B cell (primary cell): ENCODE measurements at regions of chr15 and their contacts with region 1.

Region 1: GRCh38 chr15:31365655-31366127 is 39.1 kb downstream of the KLF13 start:
- DNase-seq: peak; percentile 79
- ATAC-seq: peak; percentile 31
- H3K4me3 ChIP-seq: peak overlapping the region in 4 of 5 experiments; percentile 5 to 33 (median 15)
- H3K4me3 Mint-ChIP-seq: peak overlapping the region; percentile 80
- H3K27ac ChIP-seq: no peak overlapping the region
- H3K27ac Mint-ChIP-seq: peak overlapping the region; percentile 93
- H3K4me1 ChIP-seq: peaks cover 85 to 87% of the 10 kb centered on the region in 2 donors
- H3K4me1 Mint-ChIP-seq: peaks cover 95% of the 10 kb centered on the region
- H3K27me3 ChIP-seq: no peaks in the 10 kb centered on the region
- H3K27me3 Mint-ChIP-seq: no peaks in the 10 kb centered on the region
- CTCF ChIP-seq: peak; percentile 59

Region 2: DNA sequence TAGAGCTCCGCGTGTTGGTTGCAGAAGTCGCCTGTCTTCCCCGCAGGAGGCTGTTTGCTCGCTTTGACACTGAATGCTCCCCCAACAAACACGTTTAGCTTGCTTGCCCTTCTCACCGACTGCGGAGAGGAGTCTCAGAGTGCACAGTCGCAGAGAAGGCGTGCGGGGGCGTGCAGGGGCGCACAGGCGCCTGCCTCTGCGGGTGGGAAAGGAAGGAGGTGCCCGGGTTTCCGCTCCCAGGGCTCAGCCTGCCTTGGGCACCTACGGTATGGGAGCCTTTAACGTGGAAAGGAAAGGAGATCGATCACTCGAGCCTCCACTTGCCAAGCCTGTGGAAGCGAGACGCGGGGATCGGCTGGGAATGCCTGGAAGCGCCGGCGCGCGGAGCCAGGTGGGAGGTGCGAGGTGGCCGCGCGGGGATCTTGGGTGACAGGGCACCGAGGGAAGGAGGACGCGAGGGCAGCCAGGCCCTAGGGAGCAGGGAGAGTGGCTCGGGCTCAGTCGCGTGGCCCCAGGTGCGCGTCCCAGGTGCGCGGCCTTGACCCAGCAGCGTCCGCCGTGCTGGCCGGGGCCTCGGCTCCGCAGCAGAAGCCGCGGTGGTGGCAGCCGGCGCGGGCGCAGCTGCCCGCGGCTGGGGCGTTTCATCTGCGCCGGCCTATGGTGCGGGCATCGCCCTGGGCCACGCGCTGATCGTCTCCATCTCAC is 462.0 kb before region 1 on chr15 and contains the start of gene FAN1:
- CTCF ChIA-PET with region 1: no interaction called
- POLR2A ChIA-PET with region 1: no interaction called
- intact Hi-C with region 1: loop called (anchors 5 kb)
- DNase-seq: peak; percentile 79
- ATAC-seq: peak; percentile 93
- H3K4me3 ChIP-seq: peak within 1 kb of the TSS; percentile 62 to 84 (median 71)
- H3K4me3 Mint-ChIP-seq: peak within 1 kb of the TSS; percentile 93
- H3K27ac ChIP-seq: peak within 1 kb of the TSS in 1 of 2 donors; percentile 56
- H3K27ac Mint-ChIP-seq: peak within 1 kb of the TSS; percentile 83
- H3K4me1 ChIP-seq: peaks cover 0 to 6% of the 10 kb centered on the region in 2 donors
- H3K4me1 Mint-ChIP-seq: peaks cover 29% of the 10 kb centered on the region
- H3K27me3 ChIP-seq: no peaks in the 10 kb centered on the region
- H3K27me3 Mint-ChIP-seq: no peaks in the 10 kb centered on the region
- CTCF ChIP-seq: no peak
- total RNA-seq, gene FAN1: 20.5 and 21.3 TPM in 2 replicates

Region 3: DNA sequence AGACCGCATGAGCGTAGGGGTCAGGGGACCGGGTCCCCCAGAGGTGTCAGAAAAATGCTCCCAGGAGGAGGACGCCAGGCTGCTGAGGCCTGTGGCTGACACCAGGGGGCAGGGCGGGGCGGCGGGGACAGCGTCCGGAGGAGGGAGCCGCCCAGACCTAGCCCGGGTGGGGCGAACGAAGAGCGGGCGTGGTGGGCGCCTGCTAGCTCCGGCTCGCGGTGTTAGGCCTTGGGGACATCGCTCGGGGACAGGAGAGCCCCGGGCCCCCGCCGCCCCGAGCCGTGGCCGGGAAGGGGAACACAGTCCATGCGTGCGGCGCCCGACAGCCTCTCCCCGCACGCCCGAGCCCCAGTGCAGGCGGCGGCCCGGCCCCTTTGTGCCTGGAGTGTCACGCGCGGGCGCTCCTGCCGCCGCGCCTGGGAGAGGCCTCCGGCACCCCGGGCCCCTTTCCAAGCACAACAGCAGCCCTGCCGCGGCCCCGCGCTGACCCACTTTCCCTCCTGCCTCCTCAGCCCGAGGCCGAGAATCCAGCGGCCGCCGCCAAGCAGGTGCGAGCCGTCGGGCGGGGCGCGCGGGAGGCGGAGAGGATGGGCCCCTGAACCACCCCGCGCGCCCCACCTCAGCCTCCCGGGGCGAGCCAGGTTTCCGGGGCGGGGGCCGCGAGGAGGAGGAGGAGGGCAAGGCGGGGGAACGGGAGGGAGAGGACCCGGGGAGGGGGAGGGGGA is 150.0 kb before region 1 on chr15:
- CTCF ChIA-PET with region 1: interaction called, 17 read pairs
- POLR2A ChIA-PET with region 1: no interaction called
- intact Hi-C with region 1: loop called (anchors 1 kb)
- DNase-seq: peak; percentile 90
- ATAC-seq: peak; percentile 82
- H3K4me3 ChIP-seq: peak overlapping the region in 4 of 5 experiments; percentile 35 to 72 (median 66)
- H3K4me3 Mint-ChIP-seq: peak overlapping the region; percentile 87
- H3K27ac ChIP-seq: peak overlapping the region; percentile 66 to 79
- H3K27ac Mint-ChIP-seq: peak overlapping the region; percentile 87
- H3K4me1 ChIP-seq: peaks cover 14 to 25% of the 10 kb centered on the region in 2 donors
- H3K4me1 Mint-ChIP-seq: peaks cover 23% of the 10 kb centered on the region
- H3K27me3 ChIP-seq: no peaks in the 10 kb centered on the region
- H3K27me3 Mint-ChIP-seq: no peaks in the 10 kb centered on the region
- CTCF ChIP-seq: peak; percentile 96

Region 4: DNA sequence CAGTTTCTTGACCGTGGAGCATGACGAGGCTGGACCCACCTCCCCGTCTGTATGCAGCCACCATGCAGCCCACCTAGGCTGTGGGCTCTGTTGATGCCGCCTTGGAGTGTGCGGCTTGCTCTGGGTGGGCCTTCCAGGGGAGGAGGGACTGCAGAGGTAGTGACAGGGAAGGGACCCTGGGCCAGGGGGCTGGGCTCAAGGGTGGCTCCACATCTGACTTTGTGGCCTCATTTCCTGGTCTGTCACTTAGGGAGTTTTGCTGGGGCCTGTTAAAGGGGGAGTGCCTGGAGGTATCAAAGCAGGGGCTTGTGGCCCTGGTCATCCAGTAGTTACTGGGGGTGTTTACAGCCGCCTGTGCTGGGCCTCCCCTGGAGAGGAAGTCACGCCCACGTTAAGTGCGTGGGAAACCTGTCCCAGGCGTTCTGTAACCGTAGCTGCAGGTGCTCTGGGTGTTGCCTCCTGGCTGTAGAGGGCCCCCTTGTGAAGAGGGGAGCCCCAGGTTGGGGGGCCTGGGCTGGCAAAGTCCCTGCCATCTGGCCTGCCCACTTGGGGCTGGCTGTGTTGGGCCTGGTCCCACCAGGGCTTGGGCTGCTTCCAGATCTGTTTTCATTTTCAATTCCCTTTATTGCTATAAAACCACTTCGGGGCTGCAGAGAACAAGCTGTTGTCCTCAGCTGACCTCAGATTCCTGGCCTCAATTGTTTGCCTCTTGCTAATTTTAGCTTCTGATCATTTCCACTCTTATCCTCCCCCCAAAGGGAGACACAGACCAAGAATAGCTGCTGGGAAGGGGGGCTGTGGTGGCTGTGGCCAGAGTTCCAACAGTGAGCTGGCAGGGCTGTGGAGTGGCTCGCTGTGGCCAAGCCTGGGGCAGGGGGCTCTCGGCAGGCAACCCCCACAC is 12.5 kb before region 1 on chr15:
- CTCF ChIA-PET with region 1: interaction called, 15 read pairs
- POLR2A ChIA-PET with region 1: interaction called, 8 read pairs
- intact Hi-C with region 1: loop called (anchors 1 kb)
- DNase-seq: peak; percentile 87
- ATAC-seq: peak; percentile 82
- H3K4me3 ChIP-seq: peak overlapping the region in 4 of 5 experiments; percentile 10 to 58 (median 34)
- H3K4me3 Mint-ChIP-seq: peak overlapping the region; percentile 88
- H3K27ac ChIP-seq: peak overlapping the region; percentile 96 to 97
- H3K27ac Mint-ChIP-seq: peak overlapping the region; percentile 96
- H3K4me1 ChIP-seq: peaks cover 99 to 100% of the 10 kb centered on the region in 2 donors
- H3K4me1 Mint-ChIP-seq: peaks cover 97% of the 10 kb centered on the region
- H3K27me3 ChIP-seq: no peaks in the 10 kb centered on the region
- H3K27me3 Mint-ChIP-seq: no peaks in the 10 kb centered on the region
- CTCF ChIP-seq: no peak

Region 5: GRCh38 chr15:31391687-31392671 is 26.3 kb after region 1 on chr15:
- CTCF ChIA-PET with region 1: interaction called, 4 read pairs
- POLR2A ChIA-PET with region 1: interaction called, 8 read pairs
- intact Hi-C with region 1: loop called (anchors 1 kb)
- DNase-seq: peak; percentile 86
- ATAC-seq: peak; percentile 92
- H3K4me3 ChIP-seq: peak overlapping the region; percentile 22 to 90 (median 82)
- H3K4me3 Mint-ChIP-seq: peak overlapping the region; percentile 94
- H3K27ac ChIP-seq: peak overlapping the region; percentile 48 to 52
- H3K27ac Mint-ChIP-seq: peak overlapping the region; percentile 89
- H3K4me1 ChIP-seq: peaks cover 3 to 13% of the 10 kb centered on the region in 2 donors
- H3K4me1 Mint-ChIP-seq: peaks cover 17% of the 10 kb centered on the region
- H3K27me3 ChIP-seq: no peaks in the 10 kb centered on the region
- H3K27me3 Mint-ChIP-seq: no peaks in the 10 kb centered on the region
- CTCF ChIP-seq: no peak

Region 6: DNA sequence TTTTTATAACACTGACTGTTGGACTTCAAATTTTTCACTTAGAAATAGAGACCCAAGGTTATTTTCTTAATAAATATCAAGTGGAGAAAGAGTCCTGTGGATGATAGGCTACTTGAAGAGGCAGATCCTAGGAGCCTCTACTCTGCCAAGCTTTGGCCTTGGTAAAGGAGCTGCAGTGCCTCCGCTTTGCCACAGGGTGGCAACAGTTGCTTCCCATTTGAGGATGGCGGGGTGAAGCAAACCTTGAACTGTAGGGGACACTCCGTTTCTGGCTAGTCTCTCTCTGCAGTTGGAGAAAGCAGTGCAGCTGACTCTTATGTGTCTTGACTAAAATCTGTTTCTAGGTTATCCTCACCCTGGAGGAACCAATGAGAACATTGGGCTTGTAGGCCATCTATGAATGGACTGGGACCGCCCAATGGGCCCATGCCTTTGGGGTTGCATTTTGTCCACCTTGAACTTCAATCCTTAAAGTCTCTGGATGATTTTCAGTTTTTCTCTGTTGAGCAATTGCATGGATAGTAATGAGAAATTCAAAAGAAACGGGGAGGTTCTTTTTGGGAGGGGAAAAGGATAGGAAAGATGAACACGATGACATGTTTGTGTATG is 1285.6 kb after region 1 on chr15:
- CTCF ChIA-PET with region 1: no interaction called
- POLR2A ChIA-PET with region 1: no interaction called
- intact Hi-C with region 1: no loop called
- DNase-seq: peak; percentile 57
- ATAC-seq: peak; percentile 89
- H3K4me3 ChIP-seq: no peak overlapping the region
- H3K4me3 Mint-ChIP-seq: no peak overlapping the region
- H3K27ac ChIP-seq: no peak overlapping the region
- H3K27ac Mint-ChIP-seq: no peak overlapping the region
- H3K4me1 ChIP-seq: no peaks in the 10 kb centered on the region
- H3K4me1 Mint-ChIP-seq: no peaks in the 10 kb centered on the region
- H3K27me3 ChIP-seq: no peaks in the 10 kb centered on the region
- H3K27me3 Mint-ChIP-seq: no peaks in the 10 kb centered on the region
- CTCF ChIP-seq: peak; percentile 88